ENCODE measurements at regions of chr3 and their contacts with region 1.

Region 1: DNA sequence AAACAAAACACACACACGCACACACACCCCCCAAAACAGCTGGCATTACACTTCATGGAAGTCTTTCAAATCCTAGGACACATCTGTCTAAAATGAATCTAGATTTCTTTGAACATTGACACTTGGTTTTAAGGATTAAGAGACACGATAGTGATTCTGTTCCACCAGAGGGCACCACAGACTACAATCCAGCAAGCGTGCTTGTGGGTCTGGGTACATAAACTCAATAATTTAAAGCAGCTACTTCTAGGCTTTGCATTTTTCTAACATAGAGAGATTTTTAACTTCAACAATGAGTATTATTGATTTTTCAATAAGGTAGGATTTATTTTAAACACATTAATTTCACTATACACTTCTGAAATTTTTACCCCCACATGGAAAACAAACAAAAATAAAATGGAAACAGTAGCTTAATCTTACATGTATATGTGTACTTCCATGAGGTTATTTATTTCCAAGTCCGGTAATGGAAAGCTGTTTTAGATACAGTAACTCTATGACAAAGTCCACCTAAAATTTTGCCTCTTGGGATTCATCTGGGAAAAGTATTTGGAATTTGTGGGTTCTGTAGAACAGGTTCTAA is 564.0 kb upstream of the TGFBR2 start:
- DNase-seq: peak in 1 of 2 donors; percentile 81
- H3K4me3 ChIP-seq: no peak overlapping the region
- H3K27ac ChIP-seq: no peak overlapping the region
- H3K4me1 ChIP-seq: no peaks in the 10 kb centered on the region
- H3K27me3 ChIP-seq: no peaks in the 10 kb centered on the region
- CTCF ChIP-seq: peak; percentile 61 to 78 (median 73)

Region 2: GRCh38 chr3:29594261-29594660 is 448.1 kb before region 1 on chr3:
- intact Hi-C with region 1: no loop called
- DNase-seq: no peak
- H3K4me3 ChIP-seq: no peak overlapping the region
- H3K27ac ChIP-seq: no peak overlapping the region
- H3K4me1 ChIP-seq: no peaks in the 10 kb centered on the region
- H3K27me3 ChIP-seq: no peaks in the 10 kb centered on the region
- CTCF ChIP-seq: no peak

Region 3: GRCh38 chr3:29649815-29650547 is 392.4 kb before region 1 on chr3:
- intact Hi-C with region 1: no loop called
- DNase-seq: no peak
- H3K4me3 ChIP-seq: no peak overlapping the region
- H3K27ac ChIP-seq: no peak overlapping the region
- H3K4me1 ChIP-seq: peaks cover 0 to 7% of the 10 kb centered on the region in 2 donors
- H3K27me3 ChIP-seq: no peaks in the 10 kb centered on the region
- CTCF ChIP-seq: no peak

Region 4: GRCh38 chr3:29972320-29972993 is 69.9 kb before region 1 on chr3:
- intact Hi-C with region 1: no loop called
- DNase-seq: no peak
- H3K4me3 ChIP-seq: no peak overlapping the region
- H3K27ac ChIP-seq: peak overlapping the region; percentile 14 to 16
- H3K4me1 ChIP-seq: peaks cover 0 to 19% of the 10 kb centered on the region in 2 donors
- H3K27me3 ChIP-seq: no peaks in the 10 kb centered on the region
- CTCF ChIP-seq: no peak

Region 5: GRCh38 chr3:30199096-30199759 is 156.9 kb after region 1 on chr3:
- intact Hi-C with region 1: loop called (anchors 1 kb)
- DNase-seq: peak in 1 of 2 donors; percentile 82
- H3K4me3 ChIP-seq: peak overlapping the region in 1 of 2 donors; percentile 15
- H3K27ac ChIP-seq: no peak overlapping the region
- H3K4me1 ChIP-seq: peaks cover 0 to 12% of the 10 kb centered on the region in 2 donors
- H3K27me3 ChIP-seq: no peaks in the 10 kb centered on the region
- CTCF ChIP-seq: peak; percentile 72 to 89 (median 79)

Region 6: DNA sequence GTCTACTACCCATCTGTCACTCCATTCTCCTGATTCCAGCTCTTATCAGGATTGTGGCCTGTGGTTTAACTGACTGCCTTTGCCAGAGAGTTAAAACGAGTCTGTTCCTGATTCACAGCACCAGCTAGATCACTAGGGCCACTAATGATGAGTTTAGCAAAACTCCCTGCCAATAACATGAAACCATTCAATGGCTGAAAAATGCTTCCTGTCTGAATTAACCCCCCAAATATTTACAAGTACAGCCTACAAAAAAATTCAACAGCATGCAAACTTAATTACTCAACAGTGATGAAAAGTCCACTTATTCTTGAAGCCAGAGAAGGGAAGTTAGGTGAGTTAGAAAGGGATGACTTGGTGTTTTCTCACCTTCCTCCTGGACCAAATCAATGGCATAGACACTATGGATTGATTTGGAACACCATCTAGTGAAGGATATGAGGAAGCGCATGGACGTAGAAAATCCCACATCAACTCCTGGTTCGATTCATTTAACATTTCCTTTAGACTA is 705.5 kb after region 1 on chr3:
- intact Hi-C with region 1: loop called (anchors 5 kb)
- DNase-seq: no peak
- H3K4me3 ChIP-seq: no peak overlapping the region
- H3K27ac ChIP-seq: no peak overlapping the region
- H3K4me1 ChIP-seq: no peaks in the 10 kb centered on the region
- H3K27me3 ChIP-seq: no peaks in the 10 kb centered on the region
- CTCF ChIP-seq: peak in 1 of 3 experiments; percentile 34